ENCODE measurements at regions of chr3 and their contacts with region 1.

Region 1: GRCh38 chr3:120095226-120095978 is 1.2 kb upstream of the GSK3B start:
- DNase-seq: peak; percentile 68
- ATAC-seq: peak; percentile 66
- H3K4me3 ChIP-seq: peak overlapping the region; percentile 93
- H3K27ac ChIP-seq: peak overlapping the region; percentile 94
- H3K4me1 ChIP-seq: no peaks in the 10 kb centered on the region
- H3K27me3 ChIP-seq: no peaks in the 10 kb centered on the region
- CTCF ChIP-seq: no peak
- EP300 ChIP-seq: peak; percentile 5 to 72; a peak in 3 of 4 replicates
- POLR2A ChIP-seq: peak; percentile 92
- RAD21 ChIP-seq: no peak

Region 2: DNA sequence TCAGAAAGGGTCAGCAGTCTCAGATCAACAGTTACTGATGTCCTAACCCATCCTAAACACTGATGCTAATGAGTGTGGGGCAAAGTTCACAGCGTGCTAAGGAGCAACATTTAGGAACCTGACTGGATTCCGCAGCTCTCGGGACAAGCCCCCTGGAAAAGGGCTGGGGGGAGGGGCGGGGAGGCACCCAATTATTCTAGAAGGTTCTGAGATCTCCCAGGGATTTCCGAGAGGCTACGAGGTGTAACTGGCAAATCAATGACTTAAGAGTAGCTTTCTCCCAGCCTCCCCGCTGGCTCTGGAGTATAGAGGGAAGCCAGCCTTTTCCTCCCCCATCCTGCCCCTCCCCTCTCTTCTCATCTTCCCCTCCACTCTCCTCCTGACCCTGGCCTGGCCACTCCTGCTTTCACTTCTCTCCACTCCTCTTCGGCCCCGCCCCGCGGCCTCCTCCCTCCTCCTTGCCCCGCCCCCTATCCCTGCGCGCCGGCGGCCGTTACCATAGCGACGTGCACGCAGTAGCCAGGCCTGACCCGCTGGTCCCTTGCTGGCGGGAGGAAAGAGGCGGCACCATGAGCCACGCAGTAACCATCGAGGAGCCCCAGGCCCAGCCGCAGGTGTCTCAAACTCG is 392.8 kb before region 1 on chr3 and contains the start of gene CFAP91:
- CTCF ChIA-PET with region 1: no interaction called
- POLR2A ChIA-PET with region 1: no interaction called
- RAD21 ChIA-PET with region 1: no interaction called
- SMC1A ChIA-PET with region 1: no interaction called
- in situ Hi-C with region 1: no loop called
- intact Hi-C with region 1: loop called (anchors 10 kb)
- DNase-seq: peak; percentile 52
- ATAC-seq: peak; percentile 87
- H3K4me3 ChIP-seq: peak within 1 kb of the TSS; percentile 38; the same call in 1 of the 2 replicates
- H3K27ac ChIP-seq: peak within 1 kb of the TSS; percentile 30; the same call in 1 of the 2 replicates
- H3K4me1 ChIP-seq: peaks cover 31% of the 10 kb centered on the region
- H3K27me3 ChIP-seq: no peaks in the 10 kb centered on the region
- CTCF ChIP-seq: no peak
- EP300 ChIP-seq: no peak
- POLR2A ChIP-seq: no peak
- RAD21 ChIP-seq: no peak
- polyA plus RNA-seq, gene CFAP91: 0.03 to 0.22 TPM

Region 3: DNA sequence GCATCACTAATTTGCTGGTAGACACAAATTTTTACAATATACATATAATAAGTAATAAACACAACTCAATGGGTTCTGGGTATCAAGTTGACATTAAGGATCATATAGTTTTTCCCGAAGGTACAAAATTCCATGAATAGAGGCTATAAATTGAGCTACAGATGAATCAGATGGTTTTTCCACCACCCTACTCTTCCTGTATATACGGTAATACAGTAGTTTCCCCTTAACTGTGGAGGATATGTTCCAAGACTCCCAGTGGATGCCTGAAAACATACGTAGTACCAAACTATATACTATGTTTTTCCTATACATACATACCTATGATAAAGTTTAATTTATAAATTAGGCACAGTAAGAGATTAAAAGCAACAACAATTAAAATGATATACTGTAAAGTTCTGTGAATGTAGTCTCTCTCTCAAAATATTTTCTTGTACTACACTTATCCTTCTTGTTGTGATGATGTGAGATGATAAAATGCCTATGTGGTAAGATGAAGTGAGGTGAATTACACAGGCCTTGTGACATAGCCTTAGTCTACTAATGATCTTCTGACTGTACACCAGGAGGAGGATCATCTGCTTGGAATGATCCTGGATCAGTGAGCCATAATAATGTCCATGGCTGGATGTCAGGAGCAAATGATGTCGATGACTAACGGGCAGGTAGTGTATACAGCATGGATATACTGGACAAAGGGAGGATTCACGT is 196.8 kb before region 1 on chr3:
- CTCF ChIA-PET with region 1: no interaction called
- POLR2A ChIA-PET with region 1: interaction called, 5 read pairs
- RAD21 ChIA-PET with region 1: interaction called, 16 read pairs
- SMC1A ChIA-PET with region 1: interaction called, 6 read pairs
- in situ Hi-C with region 1: no loop called
- intact Hi-C with region 1: loop called (anchors 2 kb)
- DNase-seq: no peak
- ATAC-seq: no peak
- H3K4me3 ChIP-seq: no peak overlapping the region
- H3K27ac ChIP-seq: no peak overlapping the region
- H3K4me1 ChIP-seq: no peaks in the 10 kb centered on the region
- H3K27me3 ChIP-seq: no peaks in the 10 kb centered on the region
- CTCF ChIP-seq: no peak
- EP300 ChIP-seq: no peak
- POLR2A ChIP-seq: no peak
- RAD21 ChIP-seq: no peak

Region 4: GRCh38 chr3:120052225-120052624 is 43.2 kb before region 1 on chr3:
- CTCF ChIA-PET with region 1: interaction called, 3 read pairs
- POLR2A ChIA-PET with region 1: interaction called, 5 read pairs
- RAD21 ChIA-PET with region 1: interaction called, 5 read pairs
- SMC1A ChIA-PET with region 1: interaction called, 9 read pairs
- in situ Hi-C with region 1: no loop called
- intact Hi-C with region 1: loop called (anchors 5 kb)
- DNase-seq: peak; percentile 28
- ATAC-seq: peak; percentile 90
- H3K4me3 ChIP-seq: peak overlapping the region; percentile 29; the same call in 1 of the 2 replicates
- H3K27ac ChIP-seq: peak overlapping the region; percentile 27
- H3K4me1 ChIP-seq: peaks cover 19% of the 10 kb centered on the region
- H3K27me3 ChIP-seq: no peaks in the 10 kb centered on the region
- CTCF ChIP-seq: no peak
- EP300 ChIP-seq: no peak
- POLR2A ChIP-seq: no peak
- RAD21 ChIP-seq: no peak

Region 5: GRCh38 chr3:120081719-120082118 is 13.7 kb before region 1 on chr3:
- CTCF ChIA-PET with region 1: interaction called, 15 read pairs
- POLR2A ChIA-PET with region 1: interaction called, 51 read pairs
- RAD21 ChIA-PET with region 1: interaction called, 13 read pairs
- SMC1A ChIA-PET with region 1: interaction called, 20 read pairs
- in situ Hi-C with region 1: no loop called
- intact Hi-C with region 1: no loop called
- DNase-seq: no peak
- ATAC-seq: peak; percentile 60
- H3K4me3 ChIP-seq: no peak overlapping the region
- H3K27ac ChIP-seq: 0 out of 2 replicates have a peak overlapping the region, but pooled peaks have one; percentile 18
- H3K4me1 ChIP-seq: peaks cover 3% of the 10 kb centered on the region; the same call in 1 of the 2 replicates
- H3K27me3 ChIP-seq: no peaks in the 10 kb centered on the region
- CTCF ChIP-seq: no peak
- EP300 ChIP-seq: no peak
- POLR2A ChIP-seq: no peak
- RAD21 ChIP-seq: no peak

Region 6: GRCh38 chr3:120203016-120203415 is 107.6 kb after region 1 on chr3:
- CTCF ChIA-PET with region 1: no interaction called
- POLR2A ChIA-PET with region 1: no interaction called
- RAD21 ChIA-PET with region 1: no interaction called
- SMC1A ChIA-PET with region 1: no interaction called
- in situ Hi-C with region 1: no loop called
- intact Hi-C with region 1: no loop called
- DNase-seq: no peak
- ATAC-seq: no peak
- H3K4me3 ChIP-seq: no peak overlapping the region
- H3K27ac ChIP-seq: no peak overlapping the region
- H3K4me1 ChIP-seq: no peaks in the 10 kb centered on the region
- H3K27me3 ChIP-seq: no peaks in the 10 kb centered on the region
- CTCF ChIP-seq: no peak
- EP300 ChIP-seq: no peak
- POLR2A ChIP-seq: no peak
- RAD21 ChIP-seq: no peak

Measured in GM12878 (cell line).